ENCODE measurements at regions of chr16 and their contacts with region 1.

Region 1: GRCh38 chr16:58336332-58337089 is 41.7 kb upstream of the PRSS54 start:
- DNase-seq: peak in 1 of 2 donors; percentile 87
- H3K4me3 ChIP-seq: peak overlapping the region; percentile 31 to 48
- H3K27ac ChIP-seq: no peak overlapping the region
- H3K4me1 ChIP-seq: peaks cover 0 to 3% of the 10 kb centered on the region in 2 donors
- H3K27me3 ChIP-seq: no peaks in the 10 kb centered on the region
- CTCF ChIP-seq: peak; percentile 82 to 90 (median 87)

Region 2: DNA sequence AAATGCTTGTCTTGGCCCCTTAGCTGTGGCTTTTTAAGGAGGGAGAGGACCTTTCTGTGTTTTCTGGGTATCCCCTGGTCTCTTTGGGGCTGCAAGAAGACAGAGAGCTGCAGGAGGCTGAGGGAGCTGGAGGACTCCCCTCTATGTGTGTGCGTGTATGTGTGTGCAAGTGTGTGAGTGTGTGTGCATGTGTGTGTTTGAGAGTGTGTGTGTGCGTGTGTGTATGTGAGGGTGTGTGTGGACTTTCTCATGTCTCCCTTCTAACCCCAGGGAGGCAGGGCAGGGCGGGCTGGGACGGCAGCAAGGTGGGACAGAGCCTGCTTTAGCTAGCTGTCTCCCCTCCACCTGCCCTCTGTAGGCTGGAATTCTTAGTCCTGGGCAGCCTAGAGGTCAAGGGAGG is 43.6 kb before region 1 on chr16:
- intact Hi-C with region 1: no loop called
- DNase-seq: no peak
- H3K4me3 ChIP-seq: no peak overlapping the region
- H3K27ac ChIP-seq: no peak overlapping the region
- H3K4me1 ChIP-seq: no peaks in the 10 kb centered on the region
- H3K27me3 ChIP-seq: no peaks in the 10 kb centered on the region
- CTCF ChIP-seq: no peak

Region 3: DNA sequence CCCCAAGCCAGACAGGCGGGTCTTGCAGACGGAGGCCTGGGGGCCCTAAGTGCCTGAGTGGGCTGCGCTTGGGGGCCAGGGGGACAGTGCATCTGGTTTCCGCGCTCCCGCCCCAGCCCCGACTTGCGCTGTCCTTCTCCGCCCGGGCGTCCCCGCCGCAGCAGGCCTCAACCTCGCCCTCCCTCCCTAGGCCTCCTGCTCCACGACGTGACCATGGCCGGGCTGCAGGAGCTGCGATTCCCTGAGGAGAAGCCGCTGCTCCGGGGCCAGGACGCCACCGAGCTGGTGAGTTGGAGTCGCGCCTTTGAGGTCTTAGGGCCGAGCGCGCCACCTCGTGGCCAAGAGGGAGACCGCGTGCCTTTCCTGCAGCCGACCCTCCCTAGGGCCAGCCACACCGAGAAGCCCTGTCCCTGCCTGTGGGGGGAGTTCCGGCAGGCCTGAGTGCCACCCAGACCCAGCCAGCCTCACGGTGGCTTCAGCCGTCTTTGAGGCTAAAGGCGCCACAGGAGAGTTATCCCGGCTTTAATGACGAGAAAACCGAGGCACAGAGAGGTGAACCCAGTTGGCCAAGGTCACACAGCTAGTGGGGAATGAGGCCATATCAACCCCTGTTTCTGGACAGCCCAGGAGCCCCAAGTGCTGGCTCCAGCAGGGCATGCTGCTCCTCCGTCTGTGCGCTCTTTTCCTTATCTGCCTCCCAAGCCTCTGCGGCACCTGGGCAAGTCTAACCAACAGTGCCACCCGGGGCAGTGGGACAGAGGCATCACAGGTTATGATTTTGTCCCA is 151.2 kb after region 1 on chr16:
- intact Hi-C with region 1: loop called (anchors 1 kb)
- DNase-seq: peak in 1 of 2 donors; percentile 83
- H3K4me3 ChIP-seq: peak overlapping the region; percentile 28 to 39
- H3K27ac ChIP-seq: no peak overlapping the region
- H3K4me1 ChIP-seq: no peaks in the 10 kb centered on the region
- H3K27me3 ChIP-seq: no peaks in the 10 kb centered on the region
- CTCF ChIP-seq: peak; percentile 83 to 93 (median 89)

Region 4: GRCh38 chr16:58661199-58661830 is 324.8 kb after region 1 on chr16:
- intact Hi-C with region 1: loop called (anchors 5 kb)
- DNase-seq: peak in 1 of 2 donors; percentile 74
- H3K4me3 ChIP-seq: no peak overlapping the region
- H3K27ac ChIP-seq: no peak overlapping the region
- H3K4me1 ChIP-seq: no peaks in the 10 kb centered on the region
- H3K27me3 ChIP-seq: no peaks in the 10 kb centered on the region
- CTCF ChIP-seq: peak; percentile 27 to 57 (median 42)

Region 5: GRCh38 chr16:58755989-58756649 is 419.6 kb after region 1 on chr16:
- intact Hi-C with region 1: loop called (anchors 2 kb)
- DNase-seq: peak in 1 of 2 donors; percentile 77
- H3K4me3 ChIP-seq: no peak overlapping the region
- H3K27ac ChIP-seq: no peak overlapping the region
- H3K4me1 ChIP-seq: no peaks in the 10 kb centered on the region
- H3K27me3 ChIP-seq: no peaks in the 10 kb centered on the region
- CTCF ChIP-seq: peak; percentile 18 to 74 (median 41)

Measured in ascending aorta (tissue), 2 donors.